Activated CD4-positive, alpha-beta T cell treated with anti-CD3 and anti-CD28 coated beads for 36 hours (primary cell): ENCODE measurements at regions of chr19 and their contacts with region 1.

Region 1: DNA sequence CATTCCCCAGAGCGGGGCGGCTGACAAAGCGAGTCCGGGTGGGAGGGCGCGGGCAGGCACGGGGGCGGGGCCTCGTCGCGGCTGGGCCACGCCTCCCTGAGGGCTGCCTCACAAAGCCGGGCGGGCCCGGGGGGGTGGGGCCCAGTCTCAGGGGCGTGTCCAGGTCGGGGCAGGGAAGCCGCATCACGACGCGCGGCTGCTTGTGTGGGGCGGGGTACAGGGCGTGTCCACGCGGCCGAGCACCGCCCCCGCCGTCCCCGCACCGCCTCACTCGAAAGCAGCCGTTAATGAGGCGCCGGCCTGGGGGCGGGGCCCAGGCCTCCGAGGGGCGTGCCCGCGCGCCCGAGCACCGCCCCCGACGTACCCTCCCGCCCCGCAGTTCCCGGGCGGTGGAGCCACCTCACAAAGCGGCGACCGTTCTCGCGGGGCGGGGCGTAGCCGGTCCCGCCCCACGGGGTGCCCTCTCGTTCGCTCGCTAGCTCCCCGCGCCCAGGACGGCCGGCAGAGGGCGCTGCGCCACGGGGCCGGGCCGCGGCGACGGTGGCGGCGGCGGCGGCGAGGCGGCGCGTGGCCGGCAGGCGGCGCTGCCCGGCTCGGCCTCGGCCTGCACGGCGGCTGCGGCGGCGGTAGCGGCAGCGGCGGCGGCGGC is at the start of gene CARM1:
- DNase-seq: peak; percentile 100
- ATAC-seq: peak; percentile 88
- H3K4me3 Mint-ChIP-seq: peak within 1 kb of the TSS; percentile 80
- H3K27ac Mint-ChIP-seq: peak within 1 kb of the TSS; percentile 97
- H3K4me1 Mint-ChIP-seq: peaks cover 28% of the 10 kb centered on the region
- H3K27me3 Mint-ChIP-seq: no peaks in the 10 kb centered on the region
- total RNA-seq, gene CARM1: 82.3 to 96.8 TPM

Region 2: DNA sequence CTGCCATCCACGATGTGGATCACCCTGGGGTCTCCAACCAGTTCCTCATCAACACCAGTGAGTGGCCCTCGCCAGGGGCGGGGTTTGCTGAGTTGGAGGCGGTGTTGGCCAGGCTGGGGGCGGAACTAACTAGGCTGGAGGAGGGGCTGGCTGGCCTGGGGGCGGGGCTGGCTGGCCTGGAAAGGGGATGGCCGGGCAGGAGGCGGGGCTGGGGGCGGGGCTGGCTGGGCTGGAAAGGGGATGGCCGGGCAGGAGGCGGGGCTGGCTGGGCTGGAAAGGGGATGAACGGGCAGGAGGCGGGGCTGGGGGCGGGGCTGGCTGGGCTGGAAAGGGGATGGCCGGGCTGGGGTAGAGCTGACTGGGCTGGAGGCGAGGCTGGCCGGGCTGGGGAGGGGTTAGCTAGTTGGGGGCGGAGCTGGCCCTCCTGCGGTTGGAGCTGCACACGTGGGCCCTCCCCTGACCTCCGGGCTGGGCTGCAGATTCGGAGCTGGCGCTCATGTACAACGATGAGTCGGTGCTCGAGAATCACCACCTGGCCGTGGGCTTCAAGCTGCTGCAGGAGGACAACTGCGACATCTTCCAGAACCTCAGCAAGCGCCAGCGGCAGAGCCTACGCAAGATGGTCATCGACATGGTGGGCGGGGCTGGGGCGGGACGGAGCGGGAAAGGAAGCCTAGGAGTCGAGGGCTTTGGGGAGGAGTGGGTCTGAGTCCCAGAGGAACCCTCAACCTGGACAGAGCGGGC is 409.9 kb before region 1 on chr19:
- CTCF ChIA-PET with region 1: no interaction called
- POLR2A ChIA-PET with region 1: no interaction called
- intact Hi-C with region 1: loop called in 1 of 2 experiments (anchors 1 kb)
- DNase-seq: peak; percentile 98
- ATAC-seq: peak; percentile 98
- H3K4me3 Mint-ChIP-seq: peak overlapping the region; percentile 43
- H3K27ac Mint-ChIP-seq: no peak overlapping the region
- H3K4me1 Mint-ChIP-seq: peaks cover 9% of the 10 kb centered on the region
- H3K27me3 Mint-ChIP-seq: peaks cover 3% of the 10 kb centered on the region

Region 3: DNA sequence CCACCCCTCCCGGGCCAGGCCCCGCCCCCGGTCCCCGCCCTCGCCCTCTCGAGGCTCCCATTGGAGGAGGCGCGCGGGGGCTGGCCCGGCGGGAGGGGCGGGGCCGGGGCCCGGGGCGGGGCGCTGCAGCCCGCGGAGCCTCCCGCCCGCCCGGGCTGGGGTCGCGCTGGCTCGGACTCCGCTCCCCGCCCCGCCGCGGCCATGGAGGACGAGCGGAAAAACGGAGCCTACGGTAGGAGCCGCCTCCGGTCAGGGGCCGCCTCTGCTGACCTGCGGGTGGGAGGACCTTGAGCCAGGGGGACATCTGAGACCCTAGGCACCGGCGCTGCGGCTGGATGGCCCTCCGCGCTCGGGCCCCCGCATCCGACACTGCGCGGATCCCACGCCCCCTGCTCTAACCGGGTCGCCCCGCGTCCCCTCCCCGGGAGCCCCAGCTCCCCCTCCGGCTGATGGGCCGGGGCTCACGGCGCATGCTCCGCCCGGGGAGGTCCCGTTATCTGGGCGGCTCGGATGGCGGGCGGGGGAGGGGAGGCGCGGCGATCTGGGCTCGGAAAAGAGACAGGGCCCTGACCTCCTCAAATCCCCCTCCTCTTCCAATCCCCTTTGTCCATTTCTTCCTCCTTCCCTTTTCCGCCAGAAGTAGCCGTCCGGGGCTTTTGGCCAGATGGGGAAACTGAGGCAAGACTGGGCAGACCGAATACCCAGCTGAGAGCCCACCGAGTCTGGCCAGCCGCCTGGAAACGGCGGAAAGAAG is 268.6 kb before region 1 on chr19:
- CTCF ChIA-PET with region 1: interaction called, 4 read pairs
- POLR2A ChIA-PET with region 1: no interaction called
- intact Hi-C with region 1: loop called in 1 of 2 experiments (anchors 1 kb)
- DNase-seq: peak; percentile 95
- ATAC-seq: peak; percentile 84
- H3K4me3 Mint-ChIP-seq: peak overlapping the region; percentile 95
- H3K27ac Mint-ChIP-seq: peak overlapping the region; percentile 99
- H3K4me1 Mint-ChIP-seq: peaks cover 24% of the 10 kb centered on the region
- H3K27me3 Mint-ChIP-seq: no peaks in the 10 kb centered on the region

Region 4: GRCh38 chr19:10835754-10836477 is 35.2 kb before region 1 on chr19 and contains the start of gene TMED1:
- CTCF ChIA-PET with region 1: interaction called, 59 read pairs
- POLR2A ChIA-PET with region 1: interaction called, 3 read pairs
- intact Hi-C with region 1: loop called (anchors 1 kb)
- DNase-seq: peak; percentile 99
- ATAC-seq: peak; percentile 93
- H3K4me3 Mint-ChIP-seq: peak within 1 kb of the TSS; percentile 94
- H3K27ac Mint-ChIP-seq: peak within 1 kb of the TSS; percentile 99
- H3K4me1 Mint-ChIP-seq: peaks cover 15% of the 10 kb centered on the region
- H3K27me3 Mint-ChIP-seq: no peaks in the 10 kb centered on the region
- total RNA-seq, gene TMED1: 8.7 to 15.3 TPM

Region 5: DNA sequence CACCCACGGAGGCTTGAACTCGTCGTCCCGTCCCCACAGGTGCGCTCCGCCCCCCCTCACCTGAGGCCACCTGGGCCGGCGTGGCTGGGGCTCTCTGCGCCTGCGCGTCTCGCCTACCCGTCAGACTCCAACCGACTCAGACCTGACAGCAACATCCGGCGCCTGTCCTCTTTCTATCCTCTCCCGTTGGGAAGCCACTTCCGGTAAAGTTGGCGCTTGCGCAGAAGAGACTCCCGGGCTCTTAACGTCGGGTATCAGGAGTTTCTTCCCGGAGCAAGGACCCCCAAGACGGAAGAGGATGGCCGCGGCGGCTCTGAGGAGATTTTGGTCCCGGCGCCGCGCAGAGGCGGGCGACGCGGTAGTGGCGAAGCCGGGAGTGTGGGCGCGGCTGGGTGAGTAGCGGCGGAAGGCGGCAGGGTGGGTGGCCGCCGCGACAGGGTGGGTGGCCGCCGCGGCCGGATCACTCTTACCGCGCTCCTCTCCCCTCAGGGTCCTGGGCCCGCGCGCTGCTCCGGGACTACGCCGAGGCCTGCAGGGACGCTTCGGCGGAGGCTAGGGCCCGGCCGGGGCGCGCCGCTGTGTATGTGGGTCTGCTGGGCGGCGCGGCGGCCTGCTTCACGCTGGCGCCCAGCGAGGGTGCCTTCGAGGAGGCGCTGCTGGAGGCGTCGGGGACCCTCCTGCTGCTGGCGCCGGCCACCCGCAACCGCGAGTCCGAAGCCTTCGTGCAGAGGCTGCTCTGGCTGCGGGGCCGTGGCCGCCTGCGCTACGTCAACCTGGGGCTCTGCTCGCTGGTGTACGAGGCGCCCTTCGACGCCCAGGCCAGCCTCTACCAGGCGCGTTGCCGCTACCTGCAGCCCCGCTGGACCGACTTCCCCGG is 57.7 kb after region 1 on chr19 and contains the starts of genes TIMM29 and YIPF2:
- CTCF ChIA-PET with region 1: interaction called, 3 read pairs
- POLR2A ChIA-PET with region 1: no interaction called
- intact Hi-C with region 1: loop called (anchors 1 to 5 kb)
- DNase-seq: peak; percentile 97
- ATAC-seq: peak; percentile 96
- H3K4me3 Mint-ChIP-seq: peak within 1 kb of the TSS; percentile 90
- H3K27ac Mint-ChIP-seq: peak within 1 kb of the TSS; percentile 79
- H3K4me1 Mint-ChIP-seq: peaks cover 21% of the 10 kb centered on the region
- H3K27me3 Mint-ChIP-seq: no peaks in the 10 kb centered on the region
- total RNA-seq, gene TIMM29: 8.6 to 15.5 TPM
- total RNA-seq, gene YIPF2: 15.8 to 21.3 TPM

Region 6: GRCh38 chr19:10975374-10976130 is 104.5 kb after region 1 on chr19:
- CTCF ChIA-PET with region 1: no interaction called
- POLR2A ChIA-PET with region 1: no interaction called
- intact Hi-C with region 1: no loop called
- DNase-seq: no peak
- ATAC-seq: no peak
- H3K4me3 Mint-ChIP-seq: no peak overlapping the region
- H3K27ac Mint-ChIP-seq: no peak overlapping the region
- H3K4me1 Mint-ChIP-seq: peaks cover 45% of the 10 kb centered on the region
- H3K27me3 Mint-ChIP-seq: no peaks in the 10 kb centered on the region

Region 7: DNA sequence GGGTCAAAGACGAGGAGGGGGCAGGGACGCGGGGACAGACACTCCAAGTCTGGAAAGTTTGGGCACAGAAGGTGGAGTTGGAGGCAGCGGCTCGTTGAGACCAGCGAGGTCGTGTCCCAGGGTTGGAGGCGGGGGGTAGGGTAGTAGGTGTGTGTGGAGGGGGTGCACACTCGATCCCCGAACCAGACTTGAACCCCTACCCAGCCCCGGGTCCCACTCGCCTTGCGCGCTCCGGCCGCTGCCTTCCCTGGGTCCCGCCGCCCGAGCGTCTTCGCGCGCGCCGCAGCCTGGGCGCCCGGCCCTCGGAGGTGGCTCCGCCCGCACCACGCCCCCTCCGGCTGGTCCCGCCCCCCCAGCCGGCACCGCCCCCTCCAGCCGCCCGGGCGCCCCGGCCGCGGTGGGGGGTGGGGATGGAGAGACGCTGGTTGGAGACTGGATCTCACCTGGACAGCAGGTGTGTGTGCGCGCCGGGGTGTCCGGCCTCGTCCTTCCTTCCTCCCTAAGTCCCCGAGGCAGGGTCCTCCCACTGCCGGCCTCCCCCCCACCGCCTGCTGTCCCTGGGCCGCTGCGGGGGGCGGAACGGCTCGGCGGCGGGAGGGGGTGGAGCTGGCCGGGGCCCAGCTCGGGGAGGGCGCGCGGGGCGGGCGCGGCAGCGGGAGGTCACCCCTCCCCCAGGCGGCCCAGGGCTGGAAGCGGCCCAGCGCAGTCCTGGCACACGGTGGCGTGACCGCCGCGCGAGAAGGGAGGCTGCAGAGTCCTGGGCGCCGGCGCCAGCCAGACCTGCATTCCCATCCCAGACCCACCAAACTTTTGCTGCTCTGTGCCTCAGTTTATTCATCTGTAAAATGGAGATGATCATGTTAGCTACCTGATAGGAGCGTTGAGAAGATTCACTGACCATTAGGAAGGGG is 326.4 kb after region 1 on chr19 and contains the start of gene KANK2:
- CTCF ChIA-PET with region 1: no interaction called
- POLR2A ChIA-PET with region 1: no interaction called
- intact Hi-C with region 1: loop called in 1 of 2 experiments (anchors 5 kb)
- DNase-seq: peak; percentile 88
- ATAC-seq: peak; percentile 92
- H3K4me3 Mint-ChIP-seq: peak within 1 kb of the TSS; percentile 53
- H3K27ac Mint-ChIP-seq: no peak within 1 kb of the TSS
- H3K4me1 Mint-ChIP-seq: peaks cover 7% of the 10 kb centered on the region
- H3K27me3 Mint-ChIP-seq: peaks cover 11% of the 10 kb centered on the region
- total RNA-seq, gene KANK2: 0.91 to 1.2 TPM